B cell (primary cell): ENCODE measurements at regions of chr16 and their contacts with region 1.

Region 1: GRCh38 chr16:68843482-68844210 is at the start of gene TANGO6:
- DNase-seq: peak; percentile 93
- ATAC-seq: peak; percentile 93
- H3K4me3 ChIP-seq: peak within 1 kb of the TSS; percentile 72 to 98 (median 94)
- H3K4me3 Mint-ChIP-seq: peak within 1 kb of the TSS; percentile 93
- H3K27ac ChIP-seq: peak within 1 kb of the TSS; percentile 70 to 84
- H3K27ac Mint-ChIP-seq: peak within 1 kb of the TSS; percentile 94
- H3K4me1 ChIP-seq: peaks cover 11 to 14% of the 10 kb centered on the region in 2 donors
- H3K4me1 Mint-ChIP-seq: peaks cover 21% of the 10 kb centered on the region
- H3K27me3 ChIP-seq: no peaks in the 10 kb centered on the region
- H3K27me3 Mint-ChIP-seq: no peaks in the 10 kb centered on the region
- CTCF ChIP-seq: no peak
- total RNA-seq, gene TANGO6: 42.8 and 47.1 TPM in 2 replicates

Region 2: GRCh38 chr16:68244903-68245853 is 598.5 kb before region 1 on chr16 and contains the start of gene PLA2G15:
- CTCF ChIA-PET with region 1: no interaction called
- POLR2A ChIA-PET with region 1: no interaction called
- intact Hi-C with region 1: no loop called
- DNase-seq: peak; percentile 97
- ATAC-seq: peak; percentile 98
- H3K4me3 ChIP-seq: peak within 1 kb of the TSS; percentile 78 to 97 (median 96)
- H3K4me3 Mint-ChIP-seq: peak within 1 kb of the TSS; percentile 97
- H3K27ac ChIP-seq: peak within 1 kb of the TSS; percentile 12 to 28
- H3K27ac Mint-ChIP-seq: peak within 1 kb of the TSS; percentile 50
- H3K4me1 ChIP-seq: peaks cover 25 to 33% of the 10 kb centered on the region in 2 donors
- H3K4me1 Mint-ChIP-seq: peaks cover 32% of the 10 kb centered on the region
- H3K27me3 ChIP-seq: no peaks in the 10 kb centered on the region
- H3K27me3 Mint-ChIP-seq: no peaks in the 10 kb centered on the region
- CTCF ChIP-seq: no peak
- total RNA-seq, gene PLA2G15: 10.8 and 12.5 TPM in 2 replicates

Region 3: GRCh38 chr16:68520649-68521086 is 323.0 kb before region 1 on chr16:
- CTCF ChIA-PET with region 1: interaction called, 11 read pairs
- POLR2A ChIA-PET with region 1: no interaction called
- intact Hi-C with region 1: no loop called
- DNase-seq: peak; percentile 92
- ATAC-seq: peak; percentile 99
- H3K4me3 ChIP-seq: peak overlapping the region in 4 of 5 experiments; percentile 12 to 66 (median 33)
- H3K4me3 Mint-ChIP-seq: peak overlapping the region; percentile 77
- H3K27ac ChIP-seq: no peak overlapping the region
- H3K27ac Mint-ChIP-seq: peak overlapping the region; percentile 65
- H3K4me1 ChIP-seq: peaks cover 4 to 10% of the 10 kb centered on the region in 2 donors
- H3K4me1 Mint-ChIP-seq: peaks cover 11% of the 10 kb centered on the region
- H3K27me3 ChIP-seq: peaks cover 0 to 3% (median 0%) of the 10 kb centered on the region in 4 experiments
- H3K27me3 Mint-ChIP-seq: no peaks in the 10 kb centered on the region
- CTCF ChIP-seq: peak; percentile 99

Region 4: GRCh38 chr16:68538880-68539701 is 304.6 kb before region 1 on chr16 and contains the start of gene ZFP90:
- CTCF ChIA-PET with region 1: no interaction called
- POLR2A ChIA-PET with region 1: no interaction called
- intact Hi-C with region 1: loop called (anchors 1 kb)
- DNase-seq: peak; percentile 91
- ATAC-seq: peak; percentile 96
- H3K4me3 ChIP-seq: peak within 1 kb of the TSS; percentile 67 to 97 (median 90)
- H3K4me3 Mint-ChIP-seq: peak within 1 kb of the TSS; percentile 95
- H3K27ac ChIP-seq: peak within 1 kb of the TSS; percentile 80 to 82
- H3K27ac Mint-ChIP-seq: peak within 1 kb of the TSS; percentile 97
- H3K4me1 ChIP-seq: peaks cover 8 to 16% of the 10 kb centered on the region in 2 donors
- H3K4me1 Mint-ChIP-seq: peaks cover 15% of the 10 kb centered on the region
- H3K27me3 ChIP-seq: no peaks in the 10 kb centered on the region
- H3K27me3 Mint-ChIP-seq: no peaks in the 10 kb centered on the region
- CTCF ChIP-seq: no peak
- total RNA-seq, gene ZFP90: 30.7 and 36.0 TPM in 2 replicates

Region 5: GRCh38 chr16:68756250-68756915 is 87.3 kb before region 1 on chr16:
- CTCF ChIA-PET with region 1: interaction called, 3 read pairs
- POLR2A ChIA-PET with region 1: no interaction called
- intact Hi-C with region 1: loop called (anchors 5 kb)
- DNase-seq: peak; percentile 43
- ATAC-seq: peak; percentile 80
- H3K4me3 ChIP-seq: no peak overlapping the region
- H3K4me3 Mint-ChIP-seq: peak overlapping the region; percentile 69
- H3K27ac ChIP-seq: peak overlapping the region; percentile 50 to 69
- H3K27ac Mint-ChIP-seq: peak overlapping the region; percentile 99
- H3K4me1 ChIP-seq: peaks cover 5 to 22% of the 10 kb centered on the region in 2 donors
- H3K4me1 Mint-ChIP-seq: peaks cover 37% of the 10 kb centered on the region
- H3K27me3 ChIP-seq: peaks cover 0 to 4% (median 1%) of the 10 kb centered on the region in 4 experiments
- H3K27me3 Mint-ChIP-seq: peaks cover 2% of the 10 kb centered on the region
- CTCF ChIP-seq: no peak

Region 6: GRCh38 chr16:69123910-69124309 is 280.3 kb after region 1 on chr16:
- CTCF ChIA-PET with region 1: interaction called, 12 read pairs
- POLR2A ChIA-PET with region 1: no interaction called
- intact Hi-C with region 1: loop called (anchors 1 kb)
- DNase-seq: peak; percentile 77
- ATAC-seq: peak; percentile 70
- H3K4me3 ChIP-seq: no peak overlapping the region
- H3K4me3 Mint-ChIP-seq: no peak overlapping the region
- H3K27ac ChIP-seq: no peak overlapping the region
- H3K27ac Mint-ChIP-seq: no peak overlapping the region
- H3K4me1 ChIP-seq: no peaks in the 10 kb centered on the region
- H3K4me1 Mint-ChIP-seq: peaks cover 14% of the 10 kb centered on the region
- H3K27me3 ChIP-seq: no peaks in the 10 kb centered on the region
- H3K27me3 Mint-ChIP-seq: no peaks in the 10 kb centered on the region
- CTCF ChIP-seq: peak; percentile 81

Region 7: GRCh38 chr16:69330286-69331109 is 486.9 kb after region 1 on chr16 and contains the start of gene PDF:
- CTCF ChIA-PET with region 1: no interaction called
- POLR2A ChIA-PET with region 1: interaction called, 10 read pairs
- intact Hi-C with region 1: no loop called
- DNase-seq: peak; percentile 86
- ATAC-seq: peak; percentile 97
- H3K4me3 ChIP-seq: peak within 1 kb of the TSS; percentile 38 to 88 (median 70)
- H3K4me3 Mint-ChIP-seq: peak within 1 kb of the TSS; percentile 86
- H3K27ac ChIP-seq: peak within 1 kb of the TSS; percentile 41 to 88
- H3K27ac Mint-ChIP-seq: peak within 1 kb of the TSS; percentile 80
- H3K4me1 ChIP-seq: peaks cover 15 to 32% of the 10 kb centered on the region in 2 donors
- H3K4me1 Mint-ChIP-seq: peaks cover 44% of the 10 kb centered on the region
- H3K27me3 ChIP-seq: no peaks in the 10 kb centered on the region
- H3K27me3 Mint-ChIP-seq: no peaks in the 10 kb centered on the region
- CTCF ChIP-seq: no peak
- total RNA-seq, gene PDF: 9.2 and 9.6 TPM in 2 replicates